ENCODE measurements at regions of chr21 and their contacts with region 1.

Region 1: GRCh38 chr21:42537106-42537742 is 23.6 kb downstream of the SLC37A1 start:
- DNase-seq: no peak
- ATAC-seq: no peak
- H3K4me3 ChIP-seq: no peak overlapping the region
- H3K27ac ChIP-seq: no peak overlapping the region
- H3K4me1 ChIP-seq: peaks cover 12% of the 10 kb centered on the region
- H3K27me3 ChIP-seq: no peaks in the 10 kb centered on the region
- CTCF ChIP-seq: no peak

Region 2: GRCh38 chr21:42593007-42593806 is 56.0 kb after region 1 on chr21:
- intact Hi-C with region 1: loop called in 1 of 2 experiments (anchors 5 kb)
- DNase-seq: peak; percentile 61 to 80
- ATAC-seq: peak; percentile 53 to 74 (median 68)
- H3K4me3 ChIP-seq: no peak overlapping the region
- H3K27ac ChIP-seq: no peak overlapping the region
- H3K4me1 ChIP-seq: no peaks in the 10 kb centered on the region
- H3K27me3 ChIP-seq: peaks cover 0 to 47% (median 9%) of the 10 kb centered on the region in 3 donors
- CTCF ChIP-seq: peak; percentile 60